Mammary epithelial cell (primary cell): ENCODE measurements at regions of chr1 and their contacts with region 1.

Region 1: GRCh38 chr1:86515597-86515996 is 31.3 kb upstream of the CLCA4 start:
- DNase-seq: peak; percentile 46
- H3K4me3 ChIP-seq: no peak overlapping the region
- H3K27ac ChIP-seq: no peak overlapping the region
- H3K4me1 ChIP-seq: peaks cover 21% of the 10 kb centered on the region
- H3K27me3 ChIP-seq: no peaks in the 10 kb centered on the region
- CTCF ChIP-seq: peak; percentile 46 to 83

Region 2: GRCh38 chr1:86687595-86687994 is 172.0 kb after region 1 on chr1:
- CTCF ChIA-PET with region 1: no interaction called
- dilution Hi-C with region 1: no loop called
- in situ Hi-C with region 1: loop called in 1 of 2 experiments (anchors 25 kb)
- intact Hi-C with region 1: loop called (anchors 10 kb)
- DNase-seq: no peak
- H3K4me3 ChIP-seq: no peak overlapping the region
- H3K27ac ChIP-seq: no peak overlapping the region
- H3K4me1 ChIP-seq: no peaks in the 10 kb centered on the region
- H3K27me3 ChIP-seq: no peaks in the 10 kb centered on the region
- CTCF ChIP-seq: peak; percentile 7 to 17

Region 3: GRCh38 chr1:86953167-86953566 is 437.6 kb after region 1 on chr1:
- CTCF ChIA-PET with region 1: no interaction called
- dilution Hi-C with region 1: no loop called
- in situ Hi-C with region 1: no loop called
- intact Hi-C with region 1: no loop called
- DNase-seq: no peak
- H3K4me3 ChIP-seq: no peak overlapping the region
- H3K27ac ChIP-seq: no peak overlapping the region
- H3K4me1 ChIP-seq: no peaks in the 10 kb centered on the region
- H3K27me3 ChIP-seq: no peaks in the 10 kb centered on the region
- CTCF ChIP-seq: no peak